WTC11 (cell line): ENCODE measurements at regions of chr9 and their contacts with region 1.

Region 1: DNA sequence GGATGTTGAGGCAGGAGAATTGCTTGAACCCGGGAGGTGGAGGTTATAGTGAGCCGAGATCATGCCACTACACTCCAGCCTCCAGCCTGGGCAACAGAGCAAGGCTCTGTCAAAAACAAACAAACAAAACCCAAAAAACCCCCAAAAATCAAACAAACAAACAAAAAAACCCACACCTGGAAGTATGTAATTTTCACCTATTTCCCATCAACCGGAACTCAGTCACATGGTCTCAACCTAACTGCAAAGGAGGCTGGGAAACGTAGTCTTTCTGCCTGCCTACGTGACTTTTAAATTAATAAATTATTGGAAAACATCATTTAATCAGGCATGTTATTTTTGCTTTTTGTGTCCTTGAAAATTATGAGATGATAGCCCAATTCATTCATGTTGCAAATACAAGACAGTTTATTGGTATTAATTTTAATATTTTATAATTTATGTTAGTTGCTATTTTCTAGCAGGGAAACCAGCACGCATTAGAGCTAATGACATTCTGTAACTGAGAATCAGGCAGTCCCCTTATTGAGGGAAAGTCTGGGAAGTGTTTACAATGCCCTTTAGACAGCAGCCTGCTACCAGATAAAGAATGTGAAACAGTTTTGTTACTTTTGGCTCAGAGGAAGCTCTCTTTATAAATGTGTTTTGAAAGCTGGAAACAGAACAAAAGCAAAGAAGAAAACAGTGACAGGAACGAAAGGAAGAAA is 110.3 kb downstream of the NXNL2 start:
- DNase-seq: no peak
- ATAC-seq: no peak
- H3K4me3 Mint-ChIP-seq: no peak overlapping the region
- H3K27ac Mint-ChIP-seq: no peak overlapping the region
- H3K4me1 Mint-ChIP-seq: no peaks in the 10 kb centered on the region
- H3K27me3 Mint-ChIP-seq: peaks cover 2% of the 10 kb centered on the region; the same call in 1 of the 2 replicates
- CTCF ChIP-seq: no peak

Region 2: DNA sequence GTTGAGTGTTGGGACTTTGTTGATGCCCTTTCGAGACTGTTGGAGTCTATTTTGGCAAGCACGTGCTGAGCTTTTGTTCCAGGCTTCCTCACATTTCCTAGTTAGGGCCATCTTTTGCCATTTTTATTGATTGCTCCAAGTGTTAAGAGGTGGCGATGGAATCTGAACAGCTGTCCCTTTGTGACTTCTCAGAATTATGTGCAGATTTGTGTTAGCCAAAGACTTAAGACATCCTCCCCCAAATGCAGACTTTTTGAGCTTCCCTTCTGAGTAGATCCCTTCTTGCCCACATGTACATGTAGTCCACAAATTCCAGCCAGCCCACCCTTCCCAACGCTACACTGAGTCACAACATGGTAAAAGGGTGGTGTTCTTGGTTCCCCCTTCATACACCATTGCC is 197.9 kb before region 1 on chr9:
- CTCF ChIA-PET with region 1: no interaction called
- POLR2A ChIA-PET with region 1: no interaction called
- DNase-seq: no peak
- ATAC-seq: no peak
- H3K4me3 Mint-ChIP-seq: no peak overlapping the region
- H3K27ac Mint-ChIP-seq: peak overlapping the region; percentile 83
- H3K4me1 Mint-ChIP-seq: peaks cover 40% of the 10 kb centered on the region
- H3K27me3 Mint-ChIP-seq: no peaks in the 10 kb centered on the region
- CTCF ChIP-seq: no peak

Region 3: GRCh38 chr9:88725300-88726019 is 80.1 kb after region 1 on chr9:
- CTCF ChIA-PET with region 1: no interaction called
- POLR2A ChIA-PET with region 1: interaction called, 16 read pairs
- DNase-seq: no peak
- ATAC-seq: peak; percentile 60
- H3K4me3 Mint-ChIP-seq: no peak overlapping the region
- H3K27ac Mint-ChIP-seq: no peak overlapping the region
- H3K4me1 Mint-ChIP-seq: peaks cover 26% of the 10 kb centered on the region
- H3K27me3 Mint-ChIP-seq: no peaks in the 10 kb centered on the region; the same call in 1 of the 2 replicates
- CTCF ChIP-seq: no peak